ENCODE measurements at regions of chr6 and their contacts with region 1.

Region 1: DNA sequence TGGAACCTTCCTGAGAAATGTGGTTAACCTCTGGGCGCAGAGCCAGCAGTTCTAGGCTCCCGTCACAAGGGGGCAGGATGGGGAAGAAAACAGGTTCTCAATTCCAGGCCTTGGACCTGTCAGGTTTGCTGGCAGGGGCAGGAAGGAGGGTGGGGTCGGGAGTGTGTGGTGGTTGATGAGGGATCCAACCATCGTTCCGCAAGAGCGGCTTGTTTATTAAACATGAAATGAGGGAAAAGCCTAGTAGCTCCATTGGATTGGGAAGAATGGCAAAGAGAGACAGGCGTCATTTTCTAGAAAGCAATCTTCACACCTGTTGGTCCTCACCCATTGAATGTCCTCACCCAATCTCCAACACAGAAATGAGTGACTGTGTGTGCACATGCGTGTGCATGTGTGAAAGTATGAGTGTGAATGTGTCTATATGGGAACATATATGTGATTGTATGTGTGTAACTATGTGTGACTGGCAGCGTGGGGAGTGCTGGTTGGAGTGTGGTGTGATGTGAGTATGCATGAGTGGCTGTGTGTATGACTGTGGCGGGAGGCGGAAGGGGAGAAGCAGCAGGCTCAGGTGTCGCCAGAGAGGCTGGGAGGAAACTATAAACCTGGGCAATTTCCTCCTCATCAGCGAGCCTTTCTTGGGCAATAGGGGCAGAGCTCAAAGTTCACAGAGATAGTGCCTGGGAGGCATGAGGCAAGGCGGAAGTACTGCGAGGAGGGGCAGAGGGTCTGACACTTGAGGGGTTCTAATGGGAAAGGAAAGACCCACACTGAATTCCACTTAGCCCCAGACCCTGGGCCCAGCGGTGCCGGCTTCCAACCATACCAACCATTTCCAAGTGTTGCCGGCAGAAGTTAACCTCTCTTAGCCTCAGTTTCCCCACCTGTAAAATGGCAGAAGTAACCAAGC is 29.6 kb downstream of the SRSF3 start:
- DNase-seq: peak; percentile 80
- CTCF ChIP-seq: peak; percentile 94

Region 2: GRCh38 chr6:36064770-36065396 is 558.9 kb before region 1 on chr6:
- in situ Hi-C with region 1: no loop called
- DNase-seq: no peak
- CTCF ChIP-seq: no peak

Region 3: DNA sequence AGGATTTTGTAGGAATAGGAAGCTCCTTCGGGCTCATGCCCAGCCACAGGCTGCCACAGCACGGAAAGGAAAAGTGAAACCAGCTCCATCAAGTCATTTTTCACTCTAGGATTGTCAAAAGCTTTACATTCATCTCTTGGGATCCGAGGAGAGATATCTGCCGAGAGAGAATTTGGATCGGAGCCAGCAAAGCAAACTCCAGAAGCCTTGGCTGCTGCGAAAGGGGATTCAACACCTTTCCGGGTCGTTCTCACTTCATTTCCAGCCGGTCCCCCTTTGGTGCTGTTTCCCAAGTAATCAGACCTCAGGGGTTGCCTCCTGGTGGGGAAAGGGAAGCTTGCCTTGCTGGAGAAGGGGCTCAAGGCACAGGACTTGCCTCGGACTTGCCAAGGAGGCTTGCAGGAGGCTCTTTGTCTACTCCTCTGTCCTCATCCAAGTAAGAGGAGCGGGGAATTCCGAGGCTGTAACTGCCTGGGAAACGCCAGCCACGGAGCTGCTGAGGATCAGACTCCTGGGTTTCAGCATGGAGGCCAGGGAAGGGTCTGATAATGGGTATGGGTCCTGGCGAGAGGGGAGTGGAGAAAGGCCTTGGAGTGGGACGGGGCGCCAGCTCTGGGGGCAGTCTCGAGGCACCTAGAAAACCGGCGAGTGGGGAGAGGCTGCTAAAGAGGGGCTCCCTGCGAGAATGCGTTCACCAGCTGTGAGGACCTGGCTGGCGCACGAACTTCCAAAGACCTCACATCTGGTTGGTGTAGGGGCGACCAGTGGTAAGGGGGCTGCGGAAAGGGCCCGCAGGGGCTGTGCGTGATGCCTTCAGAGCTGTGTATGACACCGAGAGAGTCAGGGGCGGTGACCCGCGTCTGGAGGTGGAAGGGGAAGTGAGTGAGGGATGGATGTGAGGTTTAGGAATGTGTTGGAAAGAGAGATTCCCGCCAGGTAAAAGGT is 237.0 kb before region 1 on chr6:
- in situ Hi-C with region 1: no loop called
- DNase-seq: peak; percentile 63
- CTCF ChIP-seq: no peak

Region 4: GRCh38 chr6:36682328-36683144 is 58.7 kb after region 1 on chr6:
- in situ Hi-C with region 1: loop called (anchors 5 kb)
- DNase-seq: peak; percentile 57
- CTCF ChIP-seq: no peak

Region 5: DNA sequence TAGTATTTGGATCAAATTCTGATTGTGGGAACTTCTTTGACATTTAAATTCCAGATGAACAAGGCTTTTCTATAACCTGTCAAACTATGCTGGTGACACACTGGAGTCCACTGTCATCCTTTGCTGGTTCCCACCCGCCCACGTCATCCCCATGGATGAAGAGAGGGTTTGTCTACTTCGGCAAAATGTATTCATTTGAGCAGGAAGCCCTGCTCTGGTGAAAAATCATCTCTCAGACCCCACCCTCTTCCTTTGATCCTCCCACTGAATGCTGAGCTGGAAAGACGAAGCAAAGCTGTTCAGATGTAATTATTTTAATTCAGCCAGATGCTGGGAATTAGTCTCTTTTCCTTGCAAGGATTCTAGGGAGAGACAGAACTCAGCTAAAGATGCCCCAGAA is 165.0 kb after region 1 on chr6:
- in situ Hi-C with region 1: no loop called
- DNase-seq: no peak
- CTCF ChIP-seq: no peak

Measured in GM13977 (cell line).